GM18951 (cell line): ENCODE measurements at regions of chr2 and their contacts with region 1.

Region 1: DNA sequence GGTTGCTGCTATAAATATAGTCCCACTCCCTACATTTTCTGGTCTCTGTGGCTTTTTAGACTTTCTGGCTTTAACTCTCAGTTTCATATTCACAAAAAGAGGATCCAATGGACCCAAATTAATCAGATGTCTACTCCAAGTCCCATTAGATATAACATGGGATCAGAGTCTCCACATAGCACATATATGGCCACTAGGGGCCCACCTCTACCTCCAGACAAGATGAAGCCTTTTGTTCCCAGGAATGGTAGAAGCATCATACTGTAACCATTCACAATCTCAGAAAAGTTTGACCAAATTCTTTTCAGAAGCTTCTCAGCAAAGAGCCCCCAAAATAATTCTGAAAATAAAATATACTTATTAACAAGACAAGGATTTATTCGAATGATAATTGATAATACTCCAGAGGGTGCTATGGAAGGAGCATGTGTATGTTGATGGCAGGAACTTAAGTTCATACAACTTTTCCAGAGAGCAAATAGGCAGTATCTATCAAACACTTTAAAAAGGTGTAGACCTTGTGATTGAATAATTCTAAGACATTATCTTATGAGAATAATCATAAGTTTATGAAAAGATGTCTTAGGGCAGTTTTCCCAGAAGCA is 382.3 kb upstream of the CRIM1 start:
- POLR2A ChIP-seq: no peak

Region 2: DNA sequence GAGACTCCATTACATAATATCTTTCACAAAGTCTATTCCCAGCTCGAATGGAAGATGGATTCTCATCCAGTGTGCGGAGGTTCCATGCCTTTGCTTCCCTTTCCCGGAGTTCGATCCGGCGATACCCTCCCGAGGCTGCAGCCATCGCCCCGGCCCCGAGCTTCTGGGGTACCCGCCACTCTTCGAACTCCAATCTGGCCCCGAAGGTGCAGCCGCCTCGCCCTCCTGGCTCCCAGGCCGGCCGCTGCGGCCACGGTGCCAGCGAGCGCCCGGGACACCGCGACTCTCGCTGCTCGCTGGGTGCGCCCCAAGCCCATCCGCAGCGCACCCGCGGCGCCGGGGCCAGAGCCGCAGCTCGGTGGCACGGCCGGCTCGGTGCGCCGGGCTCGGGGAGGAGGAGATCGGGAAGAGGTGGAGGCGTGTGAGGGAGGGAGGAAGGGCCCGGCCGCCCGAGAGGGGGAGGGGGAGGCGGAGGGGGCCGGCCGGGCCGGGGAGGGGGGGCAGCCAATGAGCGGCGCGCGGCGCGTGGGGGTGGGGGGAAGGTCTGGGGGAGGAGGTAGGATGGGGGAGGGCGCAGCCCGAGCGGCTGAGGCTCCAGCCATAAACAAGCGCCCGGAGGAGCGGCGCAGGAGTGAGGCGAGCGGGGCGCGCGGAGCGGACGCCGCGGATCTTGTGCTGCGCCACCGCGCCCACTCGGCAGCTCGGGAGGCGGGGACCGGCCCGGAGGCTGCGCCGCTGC is 382.1 kb after region 1 on chr2 and contains the start of gene CRIM1:
- in situ Hi-C with region 1: loop called (anchors 10 kb)
- POLR2A ChIP-seq: peak; percentile 81